CD4-positive, alpha-beta T cell (primary cell): ENCODE measurements at regions of chr1 and their contacts with region 1.

Region 1: DNA sequence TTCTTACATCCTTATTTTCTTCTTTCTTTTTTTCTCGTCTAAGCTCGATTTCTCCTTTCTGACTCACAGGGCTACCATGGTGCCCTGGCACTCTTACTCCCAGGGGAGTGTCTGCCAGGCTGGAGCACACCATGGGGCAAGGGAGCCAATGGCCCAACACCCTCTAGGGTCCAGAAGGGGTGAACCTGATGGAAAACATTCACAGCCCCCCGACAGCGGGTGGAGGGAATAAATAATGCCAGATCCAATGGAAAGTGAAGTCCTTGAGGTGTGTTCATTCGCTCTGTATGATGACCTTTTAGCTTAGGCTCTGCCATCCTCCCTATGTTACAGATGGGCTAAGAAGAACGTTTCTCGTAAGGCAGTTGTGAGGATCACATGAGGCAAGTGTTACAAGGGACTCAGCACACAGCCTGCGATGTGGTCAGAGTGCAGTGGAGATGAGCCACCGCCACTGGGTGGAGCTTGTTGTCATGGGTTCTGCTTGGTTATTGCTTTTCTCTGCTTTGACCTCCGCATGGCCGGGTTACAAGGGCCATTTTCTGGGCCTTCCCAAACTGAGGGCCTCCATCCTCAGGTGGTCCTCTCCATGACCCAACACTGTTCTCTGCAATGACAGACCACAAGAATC is 3.5 kb upstream of the FCMR start:
- DNase-seq: peak in 9 of 14 experiments; percentile 41 to 85 (median 56)
- ATAC-seq: no peak
- H3K4me3 ChIP-seq: no peak overlapping the region
- H3K4me3 Mint-ChIP-seq: no peak overlapping the region
- H3K27ac ChIP-seq: peak overlapping the region; percentile 57 to 95
- H3K27ac Mint-ChIP-seq: no peak overlapping the region
- H3K4me1 ChIP-seq: peaks cover 56% of the 10 kb centered on the region
- H3K4me1 Mint-ChIP-seq: peaks cover 40% of the 10 kb centered on the region
- H3K27me3 ChIP-seq: no peaks in the 10 kb centered on the region
- H3K27me3 Mint-ChIP-seq: no peaks in the 10 kb centered on the region
- CTCF ChIP-seq: no peak

Region 2: DNA sequence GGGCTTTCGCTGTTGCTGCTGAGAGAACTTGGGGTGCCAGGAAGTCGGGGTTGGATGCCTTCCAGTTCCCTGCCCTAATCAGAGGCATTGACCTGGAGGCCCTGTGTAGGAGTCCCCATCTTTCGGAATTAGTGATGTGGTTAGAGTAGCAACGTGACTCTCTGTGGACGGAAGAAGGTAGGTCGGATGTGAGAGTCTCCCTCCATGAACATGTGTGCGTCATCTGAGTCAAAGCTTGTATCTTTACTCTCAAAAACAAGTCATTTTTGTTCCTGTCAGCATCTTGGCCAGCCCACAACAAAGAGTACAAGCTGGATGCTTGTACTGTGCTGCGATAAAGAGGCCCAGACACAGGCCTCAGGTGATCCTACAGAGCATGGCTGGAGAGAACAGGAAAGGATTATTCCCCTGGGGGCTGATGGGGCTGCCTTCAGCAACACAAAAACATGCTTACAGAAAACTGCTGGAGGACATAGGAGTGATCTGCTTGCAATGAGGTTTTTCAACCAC is 121.9 kb before region 1 on chr1:
- CTCF ChIA-PET with region 1: interaction called, 3 read pairs
- POLR2A ChIA-PET with region 1: interaction called, 29 read pairs
- intact Hi-C with region 1: no loop called
- DNase-seq: peak; percentile 61 to 97 (median 70)
- ATAC-seq: peak; percentile 89
- H3K4me3 ChIP-seq: no peak overlapping the region
- H3K4me3 Mint-ChIP-seq: peak overlapping the region; percentile 7
- H3K27ac ChIP-seq: peak overlapping the region; percentile 58 to 80
- H3K27ac Mint-ChIP-seq: peak overlapping the region; percentile 87
- H3K4me1 ChIP-seq: peaks cover 59% of the 10 kb centered on the region
- H3K4me1 Mint-ChIP-seq: peaks cover 73% of the 10 kb centered on the region
- H3K27me3 ChIP-seq: no peaks in the 10 kb centered on the region
- H3K27me3 Mint-ChIP-seq: no peaks in the 10 kb centered on the region
- CTCF ChIP-seq: no peak

Region 3: DNA sequence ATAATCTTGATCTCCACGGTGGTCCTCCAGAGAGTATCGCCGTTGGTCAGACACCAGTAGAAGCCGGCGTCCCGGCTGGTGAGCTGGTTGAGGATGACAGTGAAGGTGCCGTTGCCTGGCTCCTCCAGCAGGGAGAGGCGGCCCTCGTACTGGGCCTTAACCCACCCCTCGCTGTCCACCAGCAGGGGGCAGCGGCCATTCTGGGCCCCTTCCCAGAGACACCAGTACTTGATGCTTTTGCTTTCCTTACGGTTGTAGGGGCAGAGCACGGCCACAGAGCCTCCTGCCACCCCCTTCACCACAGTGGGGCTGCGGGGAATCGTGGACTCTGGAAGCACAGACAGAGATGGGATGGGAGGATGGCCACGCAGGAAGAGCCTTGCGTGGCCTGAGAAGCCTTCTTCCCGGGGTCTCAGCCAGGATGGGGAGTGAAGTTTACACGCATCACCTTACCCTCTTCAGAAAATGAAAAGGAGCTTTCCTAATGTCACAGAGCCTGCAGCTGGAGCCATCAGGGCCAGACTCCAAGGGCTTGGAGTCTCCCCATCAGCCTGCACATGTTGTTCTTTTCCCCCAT is 10.4 kb after region 1 on chr1:
- CTCF ChIA-PET with region 1: interaction called, 16 read pairs
- POLR2A ChIA-PET with region 1: interaction called, 73 read pairs
- intact Hi-C with region 1: no loop called
- DNase-seq: peak in 8 of 14 experiments; percentile 20 to 71 (median 49)
- ATAC-seq: peak; percentile 55
- H3K4me3 ChIP-seq: no peak overlapping the region
- H3K4me3 Mint-ChIP-seq: no peak overlapping the region
- H3K27ac ChIP-seq: no peak overlapping the region
- H3K27ac Mint-ChIP-seq: no peak overlapping the region
- H3K4me1 ChIP-seq: peaks cover 24% of the 10 kb centered on the region
- H3K4me1 Mint-ChIP-seq: peaks cover 29% of the 10 kb centered on the region
- H3K27me3 ChIP-seq: no peaks in the 10 kb centered on the region
- H3K27me3 Mint-ChIP-seq: no peaks in the 10 kb centered on the region
- CTCF ChIP-seq: peak; percentile 60

Region 4: DNA sequence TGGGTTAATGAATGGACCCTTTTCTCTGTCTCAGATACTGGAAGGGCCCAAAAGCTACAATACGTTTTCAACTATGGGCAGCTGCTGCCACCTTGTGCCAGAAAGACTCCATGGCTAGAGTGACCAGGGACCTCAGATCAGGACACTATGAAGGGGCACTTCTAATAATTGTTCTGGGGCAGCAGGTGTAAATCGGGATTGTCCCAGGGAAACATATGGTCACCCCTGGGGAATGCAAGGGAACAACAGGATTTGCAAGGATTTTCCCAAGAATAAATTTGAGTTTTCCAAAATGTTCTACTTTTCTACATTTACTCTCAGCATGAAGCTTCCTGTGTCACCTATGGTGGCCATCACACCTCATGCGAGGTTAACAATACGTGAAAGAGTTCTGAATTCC is 57.0 kb after region 1 on chr1:
- CTCF ChIA-PET with region 1: interaction called, 5 read pairs
- POLR2A ChIA-PET with region 1: interaction called, 16 read pairs
- intact Hi-C with region 1: no loop called
- DNase-seq: peak; percentile 48 to 77 (median 59)
- ATAC-seq: peak; percentile 81
- H3K4me3 ChIP-seq: no peak overlapping the region
- H3K4me3 Mint-ChIP-seq: no peak overlapping the region
- H3K27ac ChIP-seq: no peak overlapping the region
- H3K27ac Mint-ChIP-seq: no peak overlapping the region
- H3K4me1 ChIP-seq: no peaks in the 10 kb centered on the region
- H3K4me1 Mint-ChIP-seq: no peaks in the 10 kb centered on the region
- H3K27me3 ChIP-seq: peaks cover 6 to 12% of the 10 kb centered on the region in 2 experiments
- H3K27me3 Mint-ChIP-seq: peaks cover 18% of the 10 kb centered on the region
- CTCF ChIP-seq: peak; percentile 88

Region 5: GRCh38 chr1:207181838-207182237 is 256.6 kb after region 1 on chr1:
- CTCF ChIA-PET with region 1: no interaction called
- POLR2A ChIA-PET with region 1: no interaction called
- intact Hi-C with region 1: no loop called
- DNase-seq: peak in 3 of 14 experiments; percentile 30 to 47 (median 42)
- ATAC-seq: no peak
- H3K4me3 ChIP-seq: no peak overlapping the region
- H3K4me3 Mint-ChIP-seq: no peak overlapping the region
- H3K27ac ChIP-seq: no peak overlapping the region
- H3K27ac Mint-ChIP-seq: no peak overlapping the region
- H3K4me1 ChIP-seq: no peaks in the 10 kb centered on the region
- H3K4me1 Mint-ChIP-seq: no peaks in the 10 kb centered on the region
- H3K27me3 ChIP-seq: no peaks in the 10 kb centered on the region
- H3K27me3 Mint-ChIP-seq: peaks cover 11% of the 10 kb centered on the region
- CTCF ChIP-seq: peak; percentile 55

Region 6: GRCh38 chr1:207309775-207310273 is 384.6 kb after region 1 on chr1:
- CTCF ChIA-PET with region 1: no interaction called
- POLR2A ChIA-PET with region 1: no interaction called
- intact Hi-C with region 1: loop called in 1 of 2 experiments (anchors 10 kb)
- DNase-seq: peak in 2 of 14 experiments; percentile 22 to 26
- ATAC-seq: no peak
- H3K4me3 ChIP-seq: no peak overlapping the region
- H3K4me3 Mint-ChIP-seq: peak overlapping the region; percentile 32
- H3K27ac ChIP-seq: no peak overlapping the region
- H3K27ac Mint-ChIP-seq: peak overlapping the region; percentile 70
- H3K4me1 ChIP-seq: peaks cover 5% of the 10 kb centered on the region
- H3K4me1 Mint-ChIP-seq: peaks cover 22% of the 10 kb centered on the region
- H3K27me3 ChIP-seq: no peaks in the 10 kb centered on the region
- H3K27me3 Mint-ChIP-seq: no peaks in the 10 kb centered on the region
- CTCF ChIP-seq: no peak